ENCODE measurements at regions of chr4 and their contacts with region 1.

Region 1: GRCh38 chr4:40897557-40898203 is 147.9 kb downstream of the NSUN7 start:
- DNase-seq: no peak
- ATAC-seq: peak; percentile 95
- H3K4me3 ChIP-seq: 0 out of 2 replicates have a peak overlapping the region, but pooled peaks have one; percentile 34
- H3K27ac ChIP-seq: no peak overlapping the region
- H3K4me1 ChIP-seq: no peaks in the 10 kb centered on the region
- H3K27me3 ChIP-seq: no peaks in the 10 kb centered on the region
- CTCF ChIP-seq: peak; percentile 74 to 89 (median 82)
- EP300 ChIP-seq: no peak
- POLR2A ChIP-seq: no peak
- RAD21 ChIP-seq: peak; percentile 68

Region 2: GRCh38 chr4:40731792-40732245 is 165.9 kb before region 1 on chr4:
- CTCF ChIA-PET with region 1: interaction called, 140 read pairs
- POLR2A ChIA-PET with region 1: interaction called, 3 read pairs
- RAD21 ChIA-PET with region 1: interaction called, 9 read pairs
- SMC1A ChIA-PET with region 1: interaction called, 38 read pairs
- in situ Hi-C with region 1: loop called (anchors 5 kb)
- intact Hi-C with region 1: loop called (anchors 1 kb)
- DNase-seq: no peak
- ATAC-seq: peak; percentile 24; the same call in 2 of the 3 replicates
- H3K4me3 ChIP-seq: no peak overlapping the region
- H3K27ac ChIP-seq: no peak overlapping the region
- H3K4me1 ChIP-seq: 0 out of 2 replicates have a peak, but pooled peaks cover 3% of the 10 kb centered on the region
- H3K27me3 ChIP-seq: no peaks in the 10 kb centered on the region
- CTCF ChIP-seq: no peak
- EP300 ChIP-seq: no peak
- POLR2A ChIP-seq: no peak
- RAD21 ChIP-seq: no peak

Region 3: GRCh38 chr4:40840985-40841571 is 56.6 kb before region 1 on chr4:
- CTCF ChIA-PET with region 1: interaction called, 47 read pairs
- POLR2A ChIA-PET with region 1: no interaction called
- RAD21 ChIA-PET with region 1: interaction called, 17 read pairs
- SMC1A ChIA-PET with region 1: interaction called, 8 read pairs
- in situ Hi-C with region 1: no loop called
- intact Hi-C with region 1: loop called (anchors 5 kb)
- DNase-seq: peak; percentile 64
- ATAC-seq: peak; percentile 86
- H3K4me3 ChIP-seq: no peak overlapping the region
- H3K27ac ChIP-seq: peak overlapping the region; percentile 39
- H3K4me1 ChIP-seq: peaks cover 15% of the 10 kb centered on the region
- H3K27me3 ChIP-seq: no peaks in the 10 kb centered on the region
- CTCF ChIP-seq: peak; percentile 67 to 87 (median 78)
- EP300 ChIP-seq: no peak
- POLR2A ChIP-seq: no peak
- RAD21 ChIP-seq: peak; percentile 41

Region 4: DNA sequence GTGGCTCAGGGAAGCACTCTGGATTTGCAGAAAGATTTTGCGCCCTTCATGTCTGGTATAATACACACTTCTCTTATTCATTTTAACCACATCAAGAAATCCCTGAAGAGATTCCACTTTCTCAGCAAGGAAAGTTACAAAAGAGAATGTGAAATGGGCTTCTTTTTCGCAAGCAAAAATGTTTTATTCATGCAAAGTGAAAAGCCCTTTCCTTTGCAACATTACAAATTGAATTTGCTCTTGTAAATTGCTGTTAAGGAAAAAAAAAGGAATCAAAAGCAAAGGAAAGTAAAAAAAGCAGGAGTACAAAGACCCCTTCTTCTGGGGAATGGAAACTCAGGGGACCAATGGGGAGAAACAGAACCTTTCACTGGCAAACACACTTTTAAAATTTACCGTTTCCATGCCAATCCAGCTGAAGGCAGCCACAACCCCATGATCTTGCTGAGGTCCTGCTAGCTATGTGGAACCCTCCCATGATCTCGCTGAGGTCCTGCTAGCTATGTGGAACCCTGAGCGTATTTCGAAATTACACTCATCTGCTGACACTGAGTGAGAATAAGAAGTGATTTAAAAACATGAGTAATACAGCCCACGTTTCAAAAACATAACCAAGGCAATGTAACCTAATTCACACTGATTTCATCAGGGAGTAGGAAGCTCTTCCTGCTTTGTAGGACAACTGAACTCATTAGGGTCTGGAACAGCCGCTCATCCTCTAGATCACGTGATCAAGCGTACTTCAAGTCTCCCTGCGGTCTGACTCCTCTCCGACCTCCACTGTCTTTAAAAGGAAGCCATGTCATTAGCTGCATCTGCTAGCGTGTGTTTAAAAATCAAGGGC is 10.2 kb before region 1 on chr4:
- CTCF ChIA-PET with region 1: interaction called, 33 read pairs
- POLR2A ChIA-PET with region 1: no interaction called
- RAD21 ChIA-PET with region 1: interaction called, 8 read pairs
- SMC1A ChIA-PET with region 1: interaction called, 8 read pairs
- in situ Hi-C with region 1: no loop called
- intact Hi-C with region 1: no loop called
- DNase-seq: no peak
- ATAC-seq: no peak
- H3K4me3 ChIP-seq: no peak overlapping the region
- H3K27ac ChIP-seq: no peak overlapping the region
- H3K4me1 ChIP-seq: no peaks in the 10 kb centered on the region
- H3K27me3 ChIP-seq: no peaks in the 10 kb centered on the region
- CTCF ChIP-seq: no peak
- EP300 ChIP-seq: no peak
- POLR2A ChIP-seq: no peak
- RAD21 ChIP-seq: no peak

Region 5: DNA sequence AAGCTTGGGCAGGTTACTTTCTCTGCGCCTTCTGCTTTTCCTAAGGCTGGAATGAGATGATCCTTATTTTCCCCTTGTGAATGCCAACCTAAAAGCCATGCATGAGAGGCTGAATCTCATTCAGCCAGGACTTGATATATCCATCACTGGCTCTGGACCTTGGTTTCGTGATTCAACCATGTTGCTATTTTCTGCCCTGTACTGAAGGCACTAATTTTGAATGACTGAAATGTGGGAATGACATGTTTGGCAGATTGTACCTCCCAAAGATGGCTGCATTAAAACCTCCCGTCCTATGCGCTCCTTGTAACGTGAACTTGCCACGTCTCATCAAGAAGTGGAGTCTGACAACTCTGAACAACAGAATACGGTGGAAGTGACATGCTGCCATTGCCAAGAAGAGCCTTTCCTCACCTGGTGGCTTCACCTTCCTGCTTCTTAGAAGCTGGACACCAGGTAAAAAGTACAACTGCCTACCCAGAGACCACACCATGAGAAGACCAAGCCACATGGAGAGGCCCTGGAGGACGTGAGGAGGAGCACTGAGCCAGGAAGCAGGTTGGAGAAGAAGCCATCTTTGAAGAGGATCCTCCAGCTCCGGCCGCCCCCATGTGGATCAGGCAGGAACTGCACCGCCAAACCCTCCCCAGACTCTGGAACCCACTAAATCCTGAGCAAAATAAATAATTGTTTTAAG is 26.6 kb after region 1 on chr4:
- CTCF ChIA-PET with region 1: interaction called, 34 read pairs
- POLR2A ChIA-PET with region 1: no interaction called
- RAD21 ChIA-PET with region 1: interaction called, 3 read pairs
- SMC1A ChIA-PET with region 1: interaction called, 13 read pairs
- in situ Hi-C with region 1: no loop called
- intact Hi-C with region 1: no loop called
- DNase-seq: peak; percentile 12
- ATAC-seq: peak; percentile 94
- H3K4me3 ChIP-seq: no peak overlapping the region
- H3K27ac ChIP-seq: no peak overlapping the region; the same call in 1 of the 2 replicates
- H3K4me1 ChIP-seq: no peaks in the 10 kb centered on the region
- H3K27me3 ChIP-seq: no peaks in the 10 kb centered on the region
- CTCF ChIP-seq: peak; percentile 76 to 95 (median 90)
- EP300 ChIP-seq: no peak
- POLR2A ChIP-seq: no peak
- RAD21 ChIP-seq: peak; percentile 57

Measured in GM12878 (cell line).